ENCODE measurements at regions of chr15 and their contacts with region 1.

Region 1: GRCh38 chr15:79184465-79184892 is 93.9 kb upstream of the RASGRF1 start:
- DNase-seq: peak; percentile 68 to 76
- ATAC-seq: peak; percentile 88 to 91
- H3K4me3 ChIP-seq: no peak overlapping the region
- H3K27ac ChIP-seq: no peak overlapping the region
- H3K4me1 ChIP-seq: peaks cover 2% of the 10 kb centered on the region
- CTCF ChIP-seq: peak; percentile 99
- EP300 ChIP-seq: no peak
- POLR2A ChIP-seq: no peak
- RAD21 ChIP-seq: peak; percentile 96 to 99

Region 2: DNA sequence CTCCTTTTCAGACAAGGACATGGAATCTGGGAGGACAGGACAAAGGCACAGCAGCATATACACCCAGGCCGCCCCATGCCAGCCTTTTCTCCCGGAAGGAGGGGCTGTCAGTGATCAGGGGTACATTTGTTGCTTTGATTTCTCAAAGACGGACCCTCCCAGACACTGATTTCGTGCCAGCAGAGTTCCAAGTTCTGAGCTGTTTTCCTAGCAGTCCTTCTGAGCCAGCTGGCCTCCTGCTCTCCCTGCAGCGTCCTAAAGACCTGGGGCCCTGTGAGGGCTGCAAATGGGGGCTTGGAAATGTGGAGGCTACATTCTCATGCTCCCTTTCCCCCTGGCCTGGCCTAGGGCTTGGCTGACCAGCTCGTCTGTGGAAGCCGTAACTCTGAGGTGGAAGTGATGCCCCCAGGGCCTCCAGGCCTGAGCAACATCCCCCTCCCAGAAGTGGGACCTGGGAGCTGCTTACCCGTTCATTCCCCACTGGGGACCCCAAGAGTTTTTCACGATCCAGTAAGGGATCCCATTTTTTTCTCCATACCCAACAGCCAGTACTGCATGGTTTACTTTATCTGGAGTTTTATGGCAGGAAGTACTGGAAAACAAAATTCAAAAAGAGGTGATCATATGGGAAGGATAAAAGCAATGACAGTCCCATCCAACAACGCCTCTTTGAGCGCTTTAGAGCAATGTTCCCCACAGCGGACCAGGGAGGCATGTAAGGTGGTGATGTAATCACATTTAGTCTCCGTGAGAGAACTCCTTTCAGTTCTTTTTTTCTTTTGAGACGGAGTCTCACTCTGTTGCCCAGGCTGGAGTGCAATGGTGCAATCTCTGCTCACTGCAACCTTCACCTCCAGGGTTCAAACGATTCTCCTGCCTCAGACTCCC is 261.7 kb before region 1 on chr15:
- CTCF ChIA-PET with region 1: interaction called, 15 read pairs
- POLR2A ChIA-PET with region 1: no interaction called
- DNase-seq: no peak
- ATAC-seq: no peak
- H3K4me3 ChIP-seq: no peak overlapping the region
- H3K27ac ChIP-seq: no peak overlapping the region
- H3K4me1 ChIP-seq: no peaks in the 10 kb centered on the region
- CTCF ChIP-seq: no peak
- EP300 ChIP-seq: no peak
- POLR2A ChIP-seq: no peak
- RAD21 ChIP-seq: no peak

Region 3: GRCh38 chr15:78996894-78997275 is 187.6 kb before region 1 on chr15:
- CTCF ChIA-PET with region 1: interaction called, 29 read pairs
- POLR2A ChIA-PET with region 1: no interaction called
- DNase-seq: peak in 1 of 2 experiments; percentile 73
- ATAC-seq: peak in 1 of 2 experiments; percentile 51; a peak in 3 of 6 replicates
- H3K4me3 ChIP-seq: no peak overlapping the region
- H3K27ac ChIP-seq: peak overlapping the region; percentile 65 to 74
- H3K4me1 ChIP-seq: peaks cover 18% of the 10 kb centered on the region
- CTCF ChIP-seq: no peak
- EP300 ChIP-seq: no peak
- POLR2A ChIP-seq: no peak
- RAD21 ChIP-seq: no peak

Region 4: GRCh38 chr15:79058260-79058829 is 126.1 kb before region 1 on chr15:
- CTCF ChIA-PET with region 1: interaction called, 16 read pairs
- POLR2A ChIA-PET with region 1: no interaction called
- DNase-seq: no peak
- ATAC-seq: peak in 1 of 2 experiments; percentile 24; a peak in 3 of 6 replicates
- H3K4me3 ChIP-seq: no peak overlapping the region
- H3K27ac ChIP-seq: no peak overlapping the region
- H3K4me1 ChIP-seq: no peaks in the 10 kb centered on the region
- CTCF ChIP-seq: no peak
- EP300 ChIP-seq: no peak
- POLR2A ChIP-seq: no peak
- RAD21 ChIP-seq: no peak

Region 5: DNA sequence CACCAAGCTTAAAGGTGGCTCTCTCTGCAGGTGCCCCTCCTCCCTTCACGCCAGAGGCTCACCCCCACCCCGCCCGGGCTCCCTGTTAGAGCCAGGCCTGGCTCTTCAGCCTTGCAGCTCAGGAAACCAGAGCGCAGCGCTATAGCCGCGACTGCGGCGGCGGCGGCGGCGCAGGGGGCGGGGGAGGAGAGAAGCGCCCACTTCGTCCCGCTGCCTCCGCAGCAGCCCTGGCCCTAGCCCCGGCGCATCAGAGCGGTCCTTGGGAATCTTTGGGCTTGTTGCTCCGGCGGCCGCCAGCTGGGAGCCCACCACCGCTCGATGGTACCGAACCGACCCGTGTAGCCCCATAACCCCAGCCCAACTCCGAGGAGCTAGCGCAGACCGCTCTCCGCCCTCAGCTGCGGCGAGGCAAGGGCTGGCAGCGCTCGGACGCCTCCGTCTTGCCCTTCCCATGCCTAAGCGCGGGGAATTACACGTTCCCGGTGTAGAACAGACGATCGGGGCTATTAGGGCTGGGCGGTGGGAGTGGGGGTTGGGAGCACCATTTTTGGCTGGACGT is 95.1 kb before region 1 on chr15:
- CTCF ChIA-PET with region 1: interaction called, 18 read pairs
- POLR2A ChIA-PET with region 1: no interaction called
- DNase-seq: no peak
- ATAC-seq: no peak
- H3K4me3 ChIP-seq: no peak overlapping the region
- H3K27ac ChIP-seq: no peak overlapping the region
- H3K4me1 ChIP-seq: peaks cover 17% of the 10 kb centered on the region
- CTCF ChIP-seq: no peak
- EP300 ChIP-seq: no peak
- POLR2A ChIP-seq: no peak
- RAD21 ChIP-seq: no peak

Region 6: GRCh38 chr15:79122991-79123390 is 61.5 kb before region 1 on chr15:
- CTCF ChIA-PET with region 1: interaction called, 20 read pairs
- POLR2A ChIA-PET with region 1: no interaction called
- DNase-seq: no peak
- ATAC-seq: no peak
- H3K4me3 ChIP-seq: no peak overlapping the region
- H3K27ac ChIP-seq: no peak overlapping the region
- H3K4me1 ChIP-seq: no peaks in the 10 kb centered on the region
- CTCF ChIP-seq: no peak
- EP300 ChIP-seq: no peak
- POLR2A ChIP-seq: no peak
- RAD21 ChIP-seq: no peak

Region 7: DNA sequence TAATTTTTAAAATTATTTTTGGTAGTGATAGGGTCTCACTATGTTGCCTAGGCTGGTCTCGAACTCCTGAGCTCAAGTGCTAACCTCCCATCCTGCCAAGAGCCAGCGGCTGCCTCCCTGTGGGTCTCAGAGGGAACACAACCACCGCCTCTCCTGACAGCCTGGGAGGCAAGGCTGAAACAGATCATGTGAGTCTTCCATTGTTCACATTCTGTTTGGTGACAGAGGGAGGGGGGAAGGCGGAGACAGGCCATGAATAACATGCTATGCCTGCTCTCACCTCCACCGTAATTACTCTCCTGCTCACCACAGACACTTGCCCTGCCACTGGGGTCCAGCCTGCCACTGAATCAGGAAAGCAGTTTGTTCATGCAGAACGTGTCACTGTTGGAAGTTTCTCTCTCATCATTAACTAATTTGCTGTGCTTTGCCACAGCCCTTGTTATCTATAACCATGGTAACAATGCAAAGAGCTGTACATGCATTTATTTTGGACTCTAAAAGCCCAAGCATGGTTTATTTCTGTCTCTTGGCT is 15.5 kb before region 1 on chr15:
- CTCF ChIA-PET with region 1: interaction called, 49 read pairs
- POLR2A ChIA-PET with region 1: no interaction called
- DNase-seq: peak in 1 of 2 experiments; percentile 48
- ATAC-seq: peak; percentile 40 to 50; a peak in 4 of 6 replicates
- H3K4me3 ChIP-seq: no peak overlapping the region
- H3K27ac ChIP-seq: no peak overlapping the region
- H3K4me1 ChIP-seq: peaks cover 29% of the 10 kb centered on the region
- CTCF ChIP-seq: no peak
- EP300 ChIP-seq: no peak
- POLR2A ChIP-seq: no peak
- RAD21 ChIP-seq: no peak

Measured in A549 (cell line).